ENCODE measurements at regions of chr11 and their contacts with region 1.

Region 1: GRCh38 chr11:85627998-85628770 is at the start of gene TMEM126B:
- DNase-seq: peak; percentile 97 to 100 (median 98)

Region 2: GRCh38 chr11:85647604-85648299 is 19.6 kb after region 1 on chr11 and contains the start of gene TMEM126A:
- intact Hi-C with region 1: loop called (anchors 2 kb)
- DNase-seq: peak; percentile 83 to 98 (median 90)

Region 3: DNA sequence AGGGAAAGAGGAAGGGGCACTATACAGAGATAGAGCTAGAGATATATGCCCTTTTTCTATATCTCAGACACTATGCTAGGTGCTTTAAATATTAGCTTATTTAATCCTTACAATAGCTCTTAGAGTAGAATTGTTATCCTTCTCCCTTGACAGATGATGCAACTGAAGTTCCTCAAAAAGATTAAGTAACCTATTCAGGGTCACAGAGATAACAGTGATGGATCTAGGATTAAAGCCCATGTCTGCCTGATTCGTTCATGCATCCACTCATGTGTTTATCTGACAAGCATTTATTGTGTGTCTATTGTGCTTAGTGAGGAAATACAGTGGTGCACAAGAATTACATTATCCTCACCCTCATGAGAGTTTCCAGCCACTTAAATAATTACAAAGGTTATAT is 235.7 kb after region 1 on chr11:
- intact Hi-C with region 1: no loop called
- DNase-seq: no peak

Measured in posterior cingulate gyrus (tissue), 11 donors.